ENCODE measurements at regions of chr13 and their contacts with region 1.

Region 1: GRCh38 chr13:23007426-23007825 is 173.4 kb upstream of the SGCG start:
- DNase-seq: peak; percentile 80

Region 2: GRCh38 chr13:21089830-21090229 is 1917.6 kb before region 1 on chr13:
- intact Hi-C with region 1: loop called in 1 of 2 experiments (anchors 5 kb)
- DNase-seq: no peak

Region 3: DNA sequence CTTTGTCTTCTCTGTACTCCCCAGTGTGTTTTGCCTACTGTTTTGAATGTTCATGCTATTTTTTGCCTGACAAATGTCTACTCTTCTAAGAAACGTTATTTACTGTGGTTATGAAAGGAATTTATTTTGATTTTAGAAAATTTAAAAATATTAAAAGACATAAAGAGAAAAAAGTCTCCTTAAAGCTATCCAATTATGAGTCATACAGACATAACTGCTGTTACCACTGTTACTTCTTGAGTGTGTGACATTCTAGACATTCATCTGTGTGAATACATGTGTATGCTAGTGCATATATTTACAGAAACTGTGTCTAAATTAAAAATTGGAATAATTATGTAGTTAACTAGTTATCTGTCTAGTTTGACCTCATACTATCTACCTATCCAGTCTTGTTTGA is 14.3 kb before region 1 on chr13:
- intact Hi-C with region 1: loop called in 1 of 2 experiments (anchors 1 kb)
- DNase-seq: no peak

Region 4: DNA sequence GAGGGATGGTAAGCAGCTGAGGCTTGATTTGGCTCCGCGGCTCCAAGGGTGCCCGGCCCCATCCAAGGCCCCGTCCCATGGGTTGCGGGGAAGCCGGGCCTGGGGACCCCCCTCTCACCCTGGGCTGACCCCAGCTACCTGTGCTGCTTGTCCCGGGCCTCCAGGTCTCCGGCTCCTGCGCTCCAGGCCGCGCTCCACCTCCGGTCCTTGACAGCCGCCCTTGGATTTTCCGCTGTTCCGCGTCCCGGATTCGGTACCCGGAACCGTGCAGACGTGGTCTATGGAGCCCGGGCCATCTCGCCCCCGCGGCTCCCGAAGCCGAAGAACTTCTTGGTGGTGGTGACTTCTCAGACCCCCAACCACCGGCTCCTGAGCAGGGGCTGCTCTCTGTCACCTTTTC is 938.2 kb after region 1 on chr13:
- intact Hi-C with region 1: no loop called
- DNase-seq: no peak

Measured in posterior vena cava (tissue), 2 donors.